B cell (primary cell): ENCODE measurements at regions of chr14 and their contacts with region 1.

Region 1: DNA sequence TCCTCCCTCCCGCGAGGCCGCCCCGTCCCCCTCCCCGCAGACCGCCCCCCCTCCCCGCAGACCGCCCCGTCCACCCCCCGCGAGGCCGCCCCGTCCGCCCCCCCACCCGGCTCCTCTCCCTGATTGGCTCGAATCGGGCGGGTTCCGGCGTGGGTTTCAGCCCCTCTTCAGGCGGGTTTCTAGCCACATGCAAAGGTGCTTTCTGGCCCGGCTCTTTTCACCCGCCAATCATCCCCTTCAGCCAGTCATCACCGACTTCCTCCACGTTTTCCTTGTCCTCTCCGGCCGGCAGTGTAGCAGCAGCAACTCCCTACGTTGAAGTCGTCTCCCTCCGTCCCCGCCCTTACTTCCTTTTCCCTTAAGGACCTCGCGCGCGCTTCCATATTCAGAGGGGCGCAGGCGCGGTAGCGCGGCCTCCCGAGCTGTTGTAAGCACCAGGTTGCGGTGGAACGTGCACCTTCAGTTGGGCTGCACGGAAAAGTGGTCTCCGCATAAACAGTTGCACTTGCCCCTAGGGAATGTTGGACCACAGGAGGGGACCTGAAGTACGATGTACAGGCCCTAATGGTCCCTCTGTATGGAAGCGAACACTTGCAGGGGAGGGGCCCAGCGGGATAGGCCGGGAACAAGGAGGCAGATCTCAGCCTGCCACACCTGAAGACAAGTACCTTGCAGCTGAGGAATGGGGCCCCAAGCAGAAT is 44.6 kb upstream of the ESR2 start:
- DNase-seq: peak; percentile 90
- ATAC-seq: peak; percentile 90
- H3K4me3 ChIP-seq: peak overlapping the region; percentile 28 to 90 (median 80)
- H3K4me3 Mint-ChIP-seq: peak overlapping the region; percentile 90
- H3K27ac ChIP-seq: peak overlapping the region; percentile 69 to 82
- H3K27ac Mint-ChIP-seq: peak overlapping the region; percentile 90
- H3K4me1 ChIP-seq: peaks cover 14 to 17% of the 10 kb centered on the region in 2 donors
- H3K4me1 Mint-ChIP-seq: peaks cover 26% of the 10 kb centered on the region
- H3K27me3 ChIP-seq: no peaks in the 10 kb centered on the region
- H3K27me3 Mint-ChIP-seq: no peaks in the 10 kb centered on the region
- CTCF ChIP-seq: no peak

Region 2: DNA sequence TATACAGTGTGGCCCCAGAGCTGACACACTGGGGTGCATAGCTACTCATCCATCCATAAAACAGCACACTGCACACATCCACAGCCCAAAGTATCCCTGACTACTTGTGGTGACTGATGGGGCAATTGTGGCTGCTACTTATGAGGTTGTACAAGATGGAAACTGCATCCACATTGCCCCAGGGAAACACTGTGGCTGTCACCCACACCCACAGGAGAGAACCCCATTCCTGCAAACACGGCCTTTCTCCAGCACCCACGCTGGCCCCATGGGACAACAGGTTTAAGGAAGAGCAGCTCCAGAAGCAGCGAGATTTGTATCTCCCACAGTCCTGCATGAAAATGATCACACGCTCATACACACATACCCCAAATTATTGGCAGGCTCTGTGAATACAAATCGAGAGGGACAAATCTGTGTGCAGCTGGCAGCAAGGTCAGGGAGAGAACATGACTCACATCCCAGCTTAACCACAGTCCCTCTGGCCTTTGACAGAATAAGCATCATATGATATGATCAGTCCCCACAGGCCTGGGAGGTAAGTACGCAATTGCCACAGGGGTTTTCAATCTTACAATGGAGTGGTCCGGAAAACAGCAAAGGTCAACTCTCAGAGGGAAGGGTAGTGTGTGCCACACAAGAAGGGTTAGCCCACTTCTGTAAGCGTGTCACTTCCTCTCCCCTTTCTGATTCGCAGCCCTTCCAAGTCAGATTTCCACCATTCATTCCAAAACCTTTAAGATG is 106.5 kb before region 1 on chr14:
- CTCF ChIA-PET with region 1: interaction called, 3 read pairs
- POLR2A ChIA-PET with region 1: interaction called, 7 read pairs
- intact Hi-C with region 1: loop called (anchors 2 kb)
- DNase-seq: peak; percentile 31
- ATAC-seq: peak; percentile 7
- H3K4me3 ChIP-seq: no peak overlapping the region
- H3K4me3 Mint-ChIP-seq: peak overlapping the region; percentile 73
- H3K27ac ChIP-seq: no peak overlapping the region
- H3K27ac Mint-ChIP-seq: peak overlapping the region; percentile 96
- H3K4me1 ChIP-seq: peaks cover 49 to 53% of the 10 kb centered on the region in 2 donors
- H3K4me1 Mint-ChIP-seq: peaks cover 56% of the 10 kb centered on the region
- H3K27me3 ChIP-seq: no peaks in the 10 kb centered on the region
- H3K27me3 Mint-ChIP-seq: no peaks in the 10 kb centered on the region
- CTCF ChIP-seq: no peak

Region 3: GRCh38 chr14:64279704-64280668 is 58.8 kb before region 1 on chr14:
- CTCF ChIA-PET with region 1: no interaction called
- POLR2A ChIA-PET with region 1: no interaction called
- intact Hi-C with region 1: no loop called
- DNase-seq: no peak
- ATAC-seq: no peak
- H3K4me3 ChIP-seq: no peak overlapping the region
- H3K4me3 Mint-ChIP-seq: no peak overlapping the region
- H3K27ac ChIP-seq: no peak overlapping the region
- H3K27ac Mint-ChIP-seq: no peak overlapping the region
- H3K4me1 ChIP-seq: peaks cover 0 to 3% of the 10 kb centered on the region in 2 donors
- H3K4me1 Mint-ChIP-seq: peaks cover 11% of the 10 kb centered on the region
- H3K27me3 ChIP-seq: no peaks in the 10 kb centered on the region
- H3K27me3 Mint-ChIP-seq: no peaks in the 10 kb centered on the region
- CTCF ChIP-seq: no peak

Region 4: GRCh38 chr14:64465191-64465822 is 126.5 kb after region 1 on chr14 and contains the start of gene AKAP5:
- CTCF ChIA-PET with region 1: interaction called, 5 read pairs
- POLR2A ChIA-PET with region 1: no interaction called
- intact Hi-C with region 1: loop called (anchors 5 kb)
- DNase-seq: peak; percentile 81
- ATAC-seq: peak; percentile 84
- H3K4me3 ChIP-seq: peak within 1 kb of the TSS; percentile 53 to 80 (median 68)
- H3K4me3 Mint-ChIP-seq: peak within 1 kb of the TSS; percentile 88
- H3K27ac ChIP-seq: peak within 1 kb of the TSS; percentile 36 to 61
- H3K27ac Mint-ChIP-seq: peak within 1 kb of the TSS; percentile 82
- H3K4me1 ChIP-seq: peaks cover 36 to 38% of the 10 kb centered on the region in 2 donors
- H3K4me1 Mint-ChIP-seq: peaks cover 57% of the 10 kb centered on the region
- H3K27me3 ChIP-seq: no peaks in the 10 kb centered on the region
- H3K27me3 Mint-ChIP-seq: no peaks in the 10 kb centered on the region
- CTCF ChIP-seq: no peak
- total RNA-seq, gene AKAP5: 1.4 and 1.7 TPM in 2 replicates

Region 5: DNA sequence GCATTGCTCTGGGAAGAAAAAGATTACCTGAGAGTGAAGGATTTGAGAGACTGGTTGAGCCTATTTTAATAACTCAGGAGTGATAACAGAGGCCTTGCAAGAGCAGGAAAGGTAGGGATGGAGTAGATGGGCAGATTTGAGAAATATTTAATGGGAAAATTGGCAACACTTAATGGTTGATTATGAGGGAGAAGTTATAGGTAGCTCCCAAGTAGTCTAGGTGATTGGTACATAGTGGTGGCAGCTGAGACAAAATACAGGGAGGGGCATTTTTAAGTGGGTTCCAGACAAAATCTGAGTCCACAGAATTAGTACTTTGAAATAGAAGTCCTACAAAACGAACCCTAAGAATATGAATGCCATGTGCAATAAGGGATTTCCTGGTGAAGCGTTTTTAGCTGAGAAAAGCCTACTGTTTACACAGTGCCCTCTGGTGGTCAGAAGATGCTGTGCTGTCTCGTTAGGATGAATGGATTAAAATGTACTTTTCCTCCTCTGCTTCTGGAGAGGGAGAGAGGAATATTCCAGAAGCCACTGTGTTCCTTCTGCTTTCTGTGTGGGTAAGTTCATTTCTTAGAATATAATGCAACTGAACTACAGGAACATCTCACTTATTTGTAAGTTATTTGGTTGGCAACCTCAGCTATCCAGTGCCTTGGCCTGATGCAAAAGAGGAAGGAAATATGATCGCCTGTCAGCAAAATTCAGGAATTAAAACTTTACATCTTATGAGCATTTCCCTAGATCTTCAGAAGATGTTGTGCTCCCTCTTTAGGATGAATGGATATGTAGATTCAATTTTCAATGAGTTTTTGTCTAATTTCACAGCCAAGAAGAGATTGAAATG is 172.3 kb after region 1 on chr14:
- CTCF ChIA-PET with region 1: interaction called, 37 read pairs
- POLR2A ChIA-PET with region 1: interaction called, 7 read pairs
- intact Hi-C with region 1: no loop called
- DNase-seq: peak; percentile 83
- ATAC-seq: peak; percentile 56
- H3K4me3 ChIP-seq: no peak overlapping the region
- H3K4me3 Mint-ChIP-seq: peak overlapping the region; percentile 15
- H3K27ac ChIP-seq: peak overlapping the region; percentile 23 to 63
- H3K27ac Mint-ChIP-seq: peak overlapping the region; percentile 2
- H3K4me1 ChIP-seq: peaks cover 52 to 64% of the 10 kb centered on the region in 2 donors
- H3K4me1 Mint-ChIP-seq: peaks cover 78% of the 10 kb centered on the region
- H3K27me3 ChIP-seq: no peaks in the 10 kb centered on the region
- H3K27me3 Mint-ChIP-seq: no peaks in the 10 kb centered on the region
- CTCF ChIP-seq: peak; percentile 96

Region 6: GRCh38 chr14:64531567-64531966 is 192.8 kb after region 1 on chr14:
- CTCF ChIA-PET with region 1: no interaction called
- POLR2A ChIA-PET with region 1: no interaction called
- intact Hi-C with region 1: no loop called
- DNase-seq: no peak
- ATAC-seq: no peak
- H3K4me3 ChIP-seq: no peak overlapping the region
- H3K4me3 Mint-ChIP-seq: no peak overlapping the region
- H3K27ac ChIP-seq: no peak overlapping the region
- H3K27ac Mint-ChIP-seq: no peak overlapping the region
- H3K4me1 ChIP-seq: no peaks in the 10 kb centered on the region
- H3K4me1 Mint-ChIP-seq: no peaks in the 10 kb centered on the region
- H3K27me3 ChIP-seq: no peaks in the 10 kb centered on the region
- H3K27me3 Mint-ChIP-seq: no peaks in the 10 kb centered on the region
- CTCF ChIP-seq: no peak

Region 7: GRCh38 chr14:64764641-64765520 is 426.1 kb after region 1 on chr14:
- CTCF ChIA-PET with region 1: interaction called, 6 read pairs
- POLR2A ChIA-PET with region 1: no interaction called
- intact Hi-C with region 1: loop called (anchors 5 kb)
- DNase-seq: peak; percentile 73
- ATAC-seq: peak; percentile 73
- H3K4me3 ChIP-seq: peak overlapping the region in 1 of 5 experiments; percentile 15
- H3K4me3 Mint-ChIP-seq: peak overlapping the region; percentile 54
- H3K27ac ChIP-seq: no peak overlapping the region
- H3K27ac Mint-ChIP-seq: no peak overlapping the region
- H3K4me1 ChIP-seq: peaks cover 6% of the 10 kb centered on the region in 2 donors
- H3K4me1 Mint-ChIP-seq: peaks cover 13% of the 10 kb centered on the region
- H3K27me3 ChIP-seq: peaks cover 0 to 14% (median 6%) of the 10 kb centered on the region in 4 experiments
- H3K27me3 Mint-ChIP-seq: peaks cover 30% of the 10 kb centered on the region
- CTCF ChIP-seq: peak; percentile 73

Region 8: GRCh38 chr14:65195042-65195719 is 856.4 kb after region 1 on chr14:
- CTCF ChIA-PET with region 1: no interaction called
- POLR2A ChIA-PET with region 1: no interaction called
- intact Hi-C with region 1: no loop called
- DNase-seq: peak; percentile 36
- ATAC-seq: peak; percentile 76
- H3K4me3 ChIP-seq: peak overlapping the region in 4 of 5 experiments; percentile 0 to 42 (median 28)
- H3K4me3 Mint-ChIP-seq: peak overlapping the region; percentile 84
- H3K27ac ChIP-seq: peak overlapping the region; percentile 29 to 35
- H3K27ac Mint-ChIP-seq: peak overlapping the region; percentile 91
- H3K4me1 ChIP-seq: peaks cover 19 to 23% of the 10 kb centered on the region in 2 donors
- H3K4me1 Mint-ChIP-seq: peaks cover 44% of the 10 kb centered on the region
- H3K27me3 ChIP-seq: no peaks in the 10 kb centered on the region
- H3K27me3 Mint-ChIP-seq: no peaks in the 10 kb centered on the region
- CTCF ChIP-seq: no peak